Activated CD4-positive, alpha-beta T cell treated with anti-CD3 and anti-CD28 coated beads, Interleukin-2, amount 10 ng/mL, durations not matched to agents 24 days and 14 days (primary cell): ENCODE measurements at regions of chr3 and their contacts with region 1.

Region 1: GRCh38 chr3:105798381-105798934 is 70.4 kb downstream of the CBLB start:
- DNase-seq: no peak
- H3K4me3 Mint-ChIP-seq: peak overlapping the region; percentile 52
- H3K27ac Mint-ChIP-seq: peak overlapping the region; percentile 80
- H3K4me1 Mint-ChIP-seq: peaks cover 57% of the 10 kb centered on the region
- H3K27me3 Mint-ChIP-seq: no peaks in the 10 kb centered on the region

Region 2: GRCh38 chr3:105656651-105657504 is 141.6 kb before region 1 on chr3:
- intact Hi-C with region 1: no loop called
- DNase-seq: no peak
- H3K4me3 Mint-ChIP-seq: no peak overlapping the region
- H3K27ac Mint-ChIP-seq: no peak overlapping the region
- H3K4me1 Mint-ChIP-seq: peaks cover 2% of the 10 kb centered on the region
- H3K27me3 Mint-ChIP-seq: no peaks in the 10 kb centered on the region

Region 3: GRCh38 chr3:105781871-105782270 is 16.6 kb before region 1 on chr3:
- intact Hi-C with region 1: loop called (anchors 2 kb)
- DNase-seq: no peak
- H3K4me3 Mint-ChIP-seq: peak overlapping the region; percentile 35
- H3K27ac Mint-ChIP-seq: peak overlapping the region; percentile 77
- H3K4me1 Mint-ChIP-seq: peaks cover 37% of the 10 kb centered on the region
- H3K27me3 Mint-ChIP-seq: no peaks in the 10 kb centered on the region